HEK293 (cell line): ENCODE measurements at regions of chr3 and their contacts with region 1.

Region 1: GRCh38 chr3:187738331-187739093 is 6.8 kb downstream of the BCL6 start:
- H3K4me3 ChIP-seq: peak overlapping the region; percentile 37
- H3K27ac ChIP-seq: peak overlapping the region; percentile 60; the same call in 1 of the 2 replicates
- H3K4me1 ChIP-seq: no peaks in the 10 kb centered on the region
- CTCF ChIP-seq: peak; percentile 53; the same call in 1 of the 2 replicates

Region 2: GRCh38 chr3:187783098-187783497 is 44.6 kb after region 1 on chr3:
- CTCF ChIA-PET with region 1: no interaction called
- POLR2A ChIA-PET with region 1: no interaction called
- H3K4me3 ChIP-seq: no peak overlapping the region
- H3K27ac ChIP-seq: no peak overlapping the region
- H3K4me1 ChIP-seq: no peaks in the 10 kb centered on the region
- CTCF ChIP-seq: no peak

Region 3: GRCh38 chr3:189041482-189042090 is 1303.1 kb after region 1 on chr3:
- CTCF ChIA-PET with region 1: interaction called, 23 read pairs
- POLR2A ChIA-PET with region 1: no interaction called
- H3K4me3 ChIP-seq: no peak overlapping the region
- H3K27ac ChIP-seq: no peak overlapping the region
- H3K4me1 ChIP-seq: no peaks in the 10 kb centered on the region
- CTCF ChIP-seq: no peak

Region 4: GRCh38 chr3:189148081-189148507 is 1409.6 kb after region 1 on chr3:
- CTCF ChIA-PET with region 1: interaction called, 13 read pairs
- POLR2A ChIA-PET with region 1: no interaction called
- H3K4me3 ChIP-seq: no peak overlapping the region
- H3K27ac ChIP-seq: no peak overlapping the region
- H3K4me1 ChIP-seq: no peaks in the 10 kb centered on the region
- CTCF ChIP-seq: no peak